ENCODE measurements at regions of chr18 and their contacts with region 1.

Region 1: DNA sequence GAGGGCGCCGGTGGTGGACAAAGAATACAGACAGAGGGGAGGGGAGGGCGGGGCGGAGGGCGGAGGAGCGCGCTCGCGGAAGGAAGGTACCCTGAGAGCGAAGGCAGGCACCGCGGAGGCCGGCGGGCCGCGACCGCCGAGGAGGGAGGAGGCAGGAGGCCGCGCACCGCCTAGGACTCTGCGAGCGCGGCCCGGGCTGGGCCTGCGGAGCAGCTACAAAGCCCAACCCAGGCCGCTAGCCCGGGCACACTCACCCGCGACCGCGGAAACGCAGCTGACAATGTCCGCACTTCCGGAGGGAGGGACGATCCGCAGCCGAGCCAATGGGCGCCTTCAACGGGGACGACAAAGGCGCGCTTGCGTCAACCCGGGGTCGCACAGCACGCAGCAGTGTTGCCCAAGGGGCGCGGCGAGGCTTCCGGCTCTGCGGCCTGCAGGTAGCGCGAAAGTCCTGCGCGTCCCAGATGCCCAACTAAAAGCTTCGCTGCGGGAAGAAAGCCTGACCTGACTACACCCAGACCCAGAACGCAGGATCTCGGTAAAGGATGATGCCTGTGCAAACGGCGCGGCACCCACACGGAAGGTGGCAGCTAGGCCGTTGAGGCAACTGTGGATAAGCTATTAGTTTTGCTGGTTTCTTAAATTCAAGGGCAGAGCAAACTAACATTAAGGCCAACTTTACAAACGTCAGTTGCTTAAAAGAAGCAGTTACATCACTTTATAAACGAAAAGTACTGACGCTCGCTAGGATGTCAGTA is at the start of gene C18orf32:
- DNase-seq: peak; percentile 92 to 95
- ATAC-seq: peak; percentile 96
- H3K4me3 ChIP-seq: peak within 1 kb of the TSS; percentile 82 to 93 (median 90)
- H3K27ac ChIP-seq: peak within 1 kb of the TSS; percentile 94 to 98 (median 98)
- H3K4me1 ChIP-seq: peaks cover 38 to 40% of the 10 kb centered on the region in 2 donors
- H3K27me3 ChIP-seq: no peaks in the 10 kb centered on the region
- CTCF ChIP-seq: no peak
- POLR2A ChIP-seq: peak; percentile 97 to 99
- total RNA-seq, gene C18orf32: 14.0 to 28.2 (median 19.6) TPM

Region 2: GRCh38 chr18:48790226-48790874 is 696.8 kb before region 1 on chr18:
- in situ Hi-C with region 1: no loop called
- intact Hi-C with region 1: loop called (anchors 10 kb)
- DNase-seq: peak; percentile 13 to 41
- ATAC-seq: peak; percentile 59 to 72
- H3K4me3 ChIP-seq: no peak overlapping the region
- H3K27ac ChIP-seq: peak overlapping the region; percentile 67 to 82 (median 76)
- H3K4me1 ChIP-seq: peaks cover 0 to 18% of the 10 kb centered on the region in 2 donors
- H3K27me3 ChIP-seq: no peaks in the 10 kb centered on the region
- CTCF ChIP-seq: no peak
- POLR2A ChIP-seq: peak in 1 of 2 donors; percentile 17

Region 3: GRCh38 chr18:49813319-49814146 is 326.4 kb after region 1 on chr18 and contains the start of gene ACAA2:
- in situ Hi-C with region 1: loop called in 1 of 4 experiments (anchors 5 kb)
- intact Hi-C with region 1: loop called (anchors 2 kb)
- DNase-seq: peak; percentile 78 to 82
- ATAC-seq: peak; percentile 90 to 91
- H3K4me3 ChIP-seq: peak within 1 kb of the TSS; percentile 88 to 95 (median 92)
- H3K27ac ChIP-seq: peak within 1 kb of the TSS; percentile 93 to 99 (median 96)
- H3K4me1 ChIP-seq: peaks cover 14 to 20% of the 10 kb centered on the region in 2 donors
- H3K27me3 ChIP-seq: no peaks in the 10 kb centered on the region
- CTCF ChIP-seq: no peak
- POLR2A ChIP-seq: peak; percentile 38 to 65
- total RNA-seq, gene ACAA2: 73.7 to 95.7 (median 79.6) TPM

Region 4: GRCh38 chr18:50281295-50281971 is 794.3 kb after region 1 on chr18 and contains the start of gene MBD1:
- in situ Hi-C with region 1: loop called in 3 of 4 experiments (anchors 25 kb)
- intact Hi-C with region 1: loop called (anchors 5 kb)
- DNase-seq: peak; percentile 96 to 97
- ATAC-seq: peak; percentile 96 to 97
- H3K4me3 ChIP-seq: peak within 1 kb of the TSS; percentile 74 to 99 (median 90)
- H3K27ac ChIP-seq: peak within 1 kb of the TSS; percentile 88 to 95 (median 92)
- H3K4me1 ChIP-seq: peaks cover 18 to 24% of the 10 kb centered on the region in 2 donors
- H3K27me3 ChIP-seq: no peaks in the 10 kb centered on the region
- CTCF ChIP-seq: peak in 3 of 5 experiments; percentile 31 to 50 (median 35)
- POLR2A ChIP-seq: peak; percentile 85 to 93
- total RNA-seq, gene MBD1: 80.4 to 127 (median 103) TPM

Region 5: GRCh38 chr18:51197661-51198424 is 1710.7 kb after region 1 on chr18 and contains the start of gene MEX3C:
- in situ Hi-C with region 1: no loop called
- intact Hi-C with region 1: loop called (anchors 5 kb)
- DNase-seq: peak; percentile 99
- ATAC-seq: peak; percentile 85
- H3K4me3 ChIP-seq: peak within 1 kb of the TSS; percentile 80 to 94 (median 89)
- H3K27ac ChIP-seq: peak within 1 kb of the TSS; percentile 94 to 98 (median 95)
- H3K4me1 ChIP-seq: peaks cover 26 to 27% of the 10 kb centered on the region in 2 donors
- H3K27me3 ChIP-seq: no peaks in the 10 kb centered on the region
- CTCF ChIP-seq: peak in 3 of 5 experiments; percentile 15 to 48 (median 43)
- POLR2A ChIP-seq: peak in 1 of 2 donors; percentile 70
- total RNA-seq, gene MEX3C: 8.8 to 14.9 (median 12.4) TPM